CD4-positive, alpha-beta memory T cell (primary cell): ENCODE measurements at regions of chr17 and their contacts with region 1.

Region 1: GRCh38 chr17:64063766-64064224 is 43.4 kb upstream of the ICAM2 start:
- DNase-seq: peak; percentile 39 to 74 (median 54)
- H3K4me3 ChIP-seq: no peak overlapping the region
- H3K4me3 Mint-ChIP-seq: peak overlapping the region; percentile 67 to 92 (median 88)
- H3K27ac ChIP-seq: peak overlapping the region; percentile 41
- H3K27ac Mint-ChIP-seq: peak overlapping the region; percentile 7 to 97 (median 92)
- H3K4me1 ChIP-seq: peaks cover 89% of the 10 kb centered on the region
- H3K4me1 Mint-ChIP-seq: peaks cover 48 to 100% (median 77%) of the 10 kb centered on the region in 4 donors
- H3K27me3 ChIP-seq: no peaks in the 10 kb centered on the region
- H3K27me3 Mint-ChIP-seq: no peaks in the 10 kb centered on the region

Region 2: GRCh38 chr17:64051153-64051552 is 12.6 kb before region 1 on chr17:
- CTCF ChIA-PET with region 1: interaction called, 8 read pairs
- POLR2A ChIA-PET with region 1: interaction called, 17 read pairs
- intact Hi-C with region 1: loop called (anchors 1 kb)
- DNase-seq: peak; percentile 50 to 84 (median 73)
- H3K4me3 ChIP-seq: no peak overlapping the region
- H3K4me3 Mint-ChIP-seq: peak overlapping the region in 7 of 8 donors; percentile 37 to 78 (median 68)
- H3K27ac ChIP-seq: peak overlapping the region; percentile 52
- H3K27ac Mint-ChIP-seq: peak overlapping the region; percentile 69 to 96 (median 91)
- H3K4me1 ChIP-seq: peaks cover 56% of the 10 kb centered on the region
- H3K4me1 Mint-ChIP-seq: peaks cover 35 to 76% (median 54%) of the 10 kb centered on the region in 4 donors
- H3K27me3 ChIP-seq: no peaks in the 10 kb centered on the region
- H3K27me3 Mint-ChIP-seq: no peaks in the 10 kb centered on the region